Activated T-helper 1 cell treated with anti-CD3 and anti-CD28 coated beads, Interleukin-12 subunit alpha, Interleukin-12 subunit beta, Interleukin-2, Interleukin-4 antibody, amounts not matched to agents 30 ng/mL and 10 ng/mL and 1 ng/mL, durations not matched to agents 14 hours and 24 hours and 36 hours (primary cell): ENCODE measurements at regions of chr6 and their contacts with region 1.

Region 1: DNA sequence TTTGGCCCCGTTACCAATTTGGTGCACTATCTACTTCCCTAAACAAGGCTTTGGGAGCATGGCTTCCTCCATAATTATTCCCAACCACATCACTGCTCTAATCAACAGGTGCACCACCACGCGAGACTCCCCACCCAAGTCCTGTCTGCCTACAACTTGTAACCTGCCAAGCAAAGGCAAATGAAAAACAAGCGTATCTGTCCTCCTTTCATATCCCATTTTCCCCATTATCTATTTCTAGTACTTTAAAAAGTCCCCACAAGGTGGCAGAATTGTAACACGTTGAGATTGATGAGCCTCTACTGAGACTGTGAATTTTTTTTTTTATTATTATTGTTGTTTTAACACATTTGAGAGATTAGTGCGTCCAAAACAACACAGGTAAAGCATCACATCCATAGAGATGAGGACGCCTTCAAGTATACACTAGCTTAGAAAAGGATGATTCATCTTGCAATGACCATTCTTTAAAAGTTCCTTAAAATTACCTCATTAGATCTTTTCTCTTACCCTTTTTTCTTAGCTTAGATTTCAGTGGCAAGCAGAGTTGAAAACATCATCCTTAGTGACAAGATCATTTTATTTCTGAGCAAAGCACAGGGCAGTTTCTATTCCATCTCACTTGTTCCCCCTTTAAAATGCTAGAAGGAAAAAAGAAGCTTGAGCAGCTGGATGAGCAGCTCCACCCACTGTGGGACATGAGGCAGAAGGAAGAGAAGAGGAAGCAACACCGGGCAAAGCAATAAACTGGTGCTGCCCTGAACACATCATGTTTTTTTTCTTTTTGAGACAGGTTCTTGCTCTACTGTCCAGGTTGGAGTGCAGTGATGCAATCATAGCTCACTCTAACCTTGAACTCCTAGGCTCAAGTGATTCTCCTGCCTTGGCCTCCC is 210.8 kb downstream of the ARHGAP18 start:
- DNase-seq: no peak
- H3K4me3 Mint-ChIP-seq: peak overlapping the region; percentile 43
- H3K27ac Mint-ChIP-seq: peak overlapping the region; percentile 42
- H3K4me1 Mint-ChIP-seq: peaks cover 79% of the 10 kb centered on the region
- H3K27me3 Mint-ChIP-seq: no peaks in the 10 kb centered on the region

Region 2: DNA sequence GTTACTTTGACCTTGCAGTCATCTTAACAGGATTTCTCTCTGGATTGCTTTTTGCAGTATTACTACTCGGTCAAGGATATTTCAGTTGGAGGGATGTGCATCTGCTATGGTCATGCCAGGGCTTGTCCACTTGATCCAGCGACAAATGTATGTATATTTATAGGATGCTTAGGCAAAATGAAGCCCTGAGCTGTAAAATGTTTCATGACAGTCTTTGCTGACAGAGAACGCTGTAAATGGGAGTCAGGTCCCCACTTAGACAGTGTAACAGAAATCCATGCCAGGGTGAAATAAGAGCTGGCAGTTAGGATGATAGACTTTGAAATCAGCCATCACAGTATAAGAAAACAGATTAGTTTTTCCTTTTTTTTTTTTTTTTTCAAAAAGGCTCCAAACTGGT is 352.3 kb before region 1 on chr6:
- intact Hi-C with region 1: no loop called
- DNase-seq: no peak
- H3K4me3 Mint-ChIP-seq: no peak overlapping the region
- H3K27ac Mint-ChIP-seq: no peak overlapping the region
- H3K4me1 Mint-ChIP-seq: no peaks in the 10 kb centered on the region
- H3K27me3 Mint-ChIP-seq: peaks cover 4% of the 10 kb centered on the region

Region 3: DNA sequence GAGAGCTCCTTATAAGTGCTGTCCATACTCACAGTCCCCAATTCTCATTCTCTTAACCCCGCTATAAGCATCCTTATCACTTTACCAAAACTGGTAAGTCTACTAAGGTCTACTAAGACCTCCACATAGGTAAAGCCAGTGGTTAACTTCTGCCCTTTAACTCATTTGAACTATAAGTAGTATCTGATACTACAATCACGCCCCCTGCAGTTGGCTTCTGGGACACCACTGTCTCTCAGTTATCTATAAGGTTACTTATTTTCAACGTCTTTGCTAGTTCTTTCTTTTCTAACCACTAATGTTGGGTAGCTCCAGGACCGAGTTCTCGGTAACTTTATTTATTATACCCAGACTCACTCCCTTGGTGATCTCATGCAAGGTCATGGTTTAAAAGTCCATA is 68.2 kb after region 1 on chr6:
- intact Hi-C with region 1: loop called (anchors 1 kb)
- DNase-seq: peak; percentile 9
- H3K4me3 Mint-ChIP-seq: no peak overlapping the region
- H3K27ac Mint-ChIP-seq: no peak overlapping the region
- H3K4me1 Mint-ChIP-seq: no peaks in the 10 kb centered on the region
- H3K27me3 Mint-ChIP-seq: peaks cover 14% of the 10 kb centered on the region

Region 4: GRCh38 chr6:129598244-129599187 is 99.3 kb after region 1 on chr6:
- intact Hi-C with region 1: loop called (anchors 1 kb)
- DNase-seq: peak; percentile 19
- H3K4me3 Mint-ChIP-seq: no peak overlapping the region
- H3K27ac Mint-ChIP-seq: no peak overlapping the region
- H3K4me1 Mint-ChIP-seq: no peaks in the 10 kb centered on the region
- H3K27me3 Mint-ChIP-seq: no peaks in the 10 kb centered on the region

Region 5: GRCh38 chr6:129936329-129937165 is 437.4 kb after region 1 on chr6:
- intact Hi-C with region 1: loop called (anchors 1 kb)
- DNase-seq: peak; percentile 11
- H3K4me3 Mint-ChIP-seq: no peak overlapping the region
- H3K27ac Mint-ChIP-seq: no peak overlapping the region
- H3K4me1 Mint-ChIP-seq: no peaks in the 10 kb centered on the region
- H3K27me3 Mint-ChIP-seq: peaks cover 19% of the 10 kb centered on the region